CD8-positive, alpha-beta memory T cell (primary cell): ENCODE measurements at regions of chr15 and their contacts with region 1.

Region 1: GRCh38 chr15:34209421-34210282 is at the start of gene KATNBL1:
- DNase-seq: peak; percentile 87 to 97 (median 95)
- H3K4me3 ChIP-seq: peak within 1 kb of the TSS; percentile 57
- H3K4me3 Mint-ChIP-seq: peak within 1 kb of the TSS; percentile 86 to 95 (median 91)
- H3K27ac ChIP-seq: peak within 1 kb of the TSS; percentile 52
- H3K27ac Mint-ChIP-seq: peak within 1 kb of the TSS; percentile 57 to 94 (median 86)
- H3K4me1 ChIP-seq: peaks cover 14% of the 10 kb centered on the region
- H3K4me1 Mint-ChIP-seq: peaks cover 17 to 35% (median 35%) of the 10 kb centered on the region in 3 donors
- H3K27me3 ChIP-seq: no peaks in the 10 kb centered on the region
- H3K27me3 Mint-ChIP-seq: no peaks in the 10 kb centered on the region
- total RNA-seq, gene KATNBL1: 42.2 to 43.8 TPM

Region 2: GRCh38 chr15:34056936-34057335 is 152.7 kb before region 1 on chr15:
- CTCF ChIA-PET with region 1: interaction called, 75 read pairs
- POLR2A ChIA-PET with region 1: no interaction called
- DNase-seq: no peak
- H3K4me3 ChIP-seq: no peak overlapping the region
- H3K4me3 Mint-ChIP-seq: no peak overlapping the region
- H3K27ac ChIP-seq: no peak overlapping the region
- H3K27ac Mint-ChIP-seq: no peak overlapping the region
- H3K4me1 ChIP-seq: no peaks in the 10 kb centered on the region
- H3K4me1 Mint-ChIP-seq: peaks cover 1 to 3% (median 3%) of the 10 kb centered on the region in 3 donors
- H3K27me3 ChIP-seq: no peaks in the 10 kb centered on the region
- H3K27me3 Mint-ChIP-seq: peaks cover 0 to 2% of the 10 kb centered on the region in 2 donors

Region 3: GRCh38 chr15:34101366-34102175 is 108.1 kb before region 1 on chr15 and contains the starts of genes EMC7 and PGBD4:
- CTCF ChIA-PET with region 1: interaction called, 20 read pairs
- POLR2A ChIA-PET with region 1: interaction called, 9 read pairs
- DNase-seq: peak; percentile 97 to 99 (median 99)
- H3K4me3 ChIP-seq: peak within 1 kb of the TSS; percentile 95
- H3K4me3 Mint-ChIP-seq: peak within 1 kb of the TSS; percentile 92 to 100 (median 99)
- H3K27ac ChIP-seq: peak within 1 kb of the TSS; percentile 98
- H3K27ac Mint-ChIP-seq: peak within 1 kb of the TSS; percentile 95 to 100 (median 99)
- H3K4me1 ChIP-seq: peaks cover 26% of the 10 kb centered on the region
- H3K4me1 Mint-ChIP-seq: peaks cover 37 to 52% (median 49%) of the 10 kb centered on the region in 3 donors
- H3K27me3 ChIP-seq: no peaks in the 10 kb centered on the region
- H3K27me3 Mint-ChIP-seq: peaks cover 0 to 2% of the 10 kb centered on the region in 2 donors
- total RNA-seq, gene EMC7: 75.0 to 78.9 TPM
- total RNA-seq, gene PGBD4: 2.8 to 3.2 TPM

Region 4: DNA sequence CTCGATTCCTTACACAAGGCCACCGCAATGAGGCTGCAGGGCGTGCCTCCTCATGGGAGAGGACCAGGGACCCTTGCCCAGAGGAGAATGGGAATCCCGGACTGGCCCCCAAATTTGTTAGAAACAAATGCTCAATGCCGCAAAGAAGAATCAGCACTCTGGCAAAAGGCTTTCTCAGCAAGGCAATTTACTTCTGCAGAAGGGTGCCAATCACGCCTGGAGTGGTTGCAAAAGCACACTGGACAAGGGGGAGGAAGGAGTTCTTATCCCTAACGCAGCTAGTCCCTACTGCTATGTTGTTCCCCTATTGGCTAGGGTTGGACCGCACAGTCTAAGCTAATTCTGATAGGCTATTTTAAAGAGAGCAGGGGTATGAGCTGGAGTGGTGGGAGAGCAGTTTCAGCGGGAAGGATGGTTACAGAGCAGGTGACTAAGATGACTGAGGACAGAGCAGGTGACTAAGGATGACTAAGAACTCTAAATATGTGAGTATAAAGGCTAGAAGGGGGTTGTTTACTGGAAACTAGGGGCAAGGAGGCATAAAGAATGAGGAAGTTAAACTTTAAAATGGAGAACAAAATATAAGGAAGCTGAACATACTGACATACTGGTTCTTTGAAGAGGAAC is 48.2 kb before region 1 on chr15:
- CTCF ChIA-PET with region 1: no interaction called
- POLR2A ChIA-PET with region 1: no interaction called
- DNase-seq: no peak
- H3K4me3 ChIP-seq: no peak overlapping the region
- H3K4me3 Mint-ChIP-seq: no peak overlapping the region
- H3K27ac ChIP-seq: no peak overlapping the region
- H3K27ac Mint-ChIP-seq: no peak overlapping the region
- H3K4me1 ChIP-seq: no peaks in the 10 kb centered on the region
- H3K4me1 Mint-ChIP-seq: peaks cover 0 to 5% (median 4%) of the 10 kb centered on the region in 3 donors
- H3K27me3 ChIP-seq: no peaks in the 10 kb centered on the region
- H3K27me3 Mint-ChIP-seq: no peaks in the 10 kb centered on the region

Region 5: DNA sequence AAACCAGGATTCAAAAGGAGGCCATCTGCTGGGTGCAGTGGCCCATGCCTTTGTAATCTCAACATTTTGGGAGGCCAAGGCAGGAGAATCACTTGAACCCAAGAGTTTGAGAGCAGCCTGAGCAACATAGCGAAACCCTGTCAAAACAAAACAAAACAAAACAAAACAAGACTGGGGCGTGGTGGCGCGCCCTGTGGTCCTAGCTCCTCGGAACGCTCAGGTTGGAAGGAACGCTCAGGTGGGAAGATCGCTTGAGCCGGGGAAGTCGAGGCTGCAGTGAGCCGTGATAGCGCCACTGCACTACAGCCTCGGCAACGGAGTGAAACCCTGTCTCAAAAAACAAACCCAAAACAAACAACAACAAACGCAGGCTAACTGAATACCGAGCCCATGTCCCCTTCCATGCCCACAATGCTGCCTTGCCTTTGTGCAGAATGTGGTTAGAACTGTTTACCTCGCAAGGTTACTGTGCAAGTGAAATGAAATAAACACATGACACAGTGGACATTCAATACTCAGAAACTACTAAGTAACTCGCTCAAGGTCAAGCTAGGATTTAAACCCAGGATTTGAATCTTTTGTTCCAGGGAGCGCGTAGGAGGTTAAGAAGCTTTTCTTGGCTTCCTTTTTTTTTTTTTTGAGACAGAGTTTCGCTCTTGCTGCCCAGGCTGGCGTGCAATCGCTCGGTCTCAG is 14.4 kb after region 1 on chr15:
- CTCF ChIA-PET with region 1: interaction called, 25 read pairs
- POLR2A ChIA-PET with region 1: interaction called, 6 read pairs
- DNase-seq: no peak
- H3K4me3 ChIP-seq: peak overlapping the region; percentile 97
- H3K4me3 Mint-ChIP-seq: peak overlapping the region; percentile 91 to 99 (median 95)
- H3K27ac ChIP-seq: peak overlapping the region; percentile 90
- H3K27ac Mint-ChIP-seq: peak overlapping the region; percentile 81 to 99 (median 98)
- H3K4me1 ChIP-seq: peaks cover 18% of the 10 kb centered on the region
- H3K4me1 Mint-ChIP-seq: peaks cover 25 to 39% (median 29%) of the 10 kb centered on the region in 3 donors
- H3K27me3 ChIP-seq: no peaks in the 10 kb centered on the region
- H3K27me3 Mint-ChIP-seq: peaks cover 4 to 9% of the 10 kb centered on the region in 2 donors

Region 6: GRCh38 chr15:34456658-34457057 is 247.0 kb after region 1 on chr15:
- CTCF ChIA-PET with region 1: no interaction called
- POLR2A ChIA-PET with region 1: no interaction called
- DNase-seq: no peak
- H3K4me3 ChIP-seq: no peak overlapping the region
- H3K4me3 Mint-ChIP-seq: no peak overlapping the region
- H3K27ac ChIP-seq: no peak overlapping the region
- H3K27ac Mint-ChIP-seq: no peak overlapping the region
- H3K4me1 ChIP-seq: no peaks in the 10 kb centered on the region
- H3K4me1 Mint-ChIP-seq: no peaks in the 10 kb centered on the region
- H3K27me3 ChIP-seq: no peaks in the 10 kb centered on the region
- H3K27me3 Mint-ChIP-seq: peaks cover 10 to 49% of the 10 kb centered on the region in 2 donors